Endothelial cell of umbilical vein (primary cell): ENCODE measurements at regions of chrX and their contacts with region 1.

Region 1: GRCh38 chrX:43557792-43558191 is 98.3 kb upstream of the MAOA start:
- DNase-seq: peak; percentile 59
- H3K4me3 ChIP-seq: no peak overlapping the region
- H3K27ac ChIP-seq: no peak overlapping the region
- H3K4me1 ChIP-seq: no peaks in the 10 kb centered on the region
- H3K27me3 ChIP-seq: no peaks in the 10 kb centered on the region
- CTCF ChIP-seq: peak; percentile 29 to 55
- POLR2A ChIP-seq: no peak

Region 2: DNA sequence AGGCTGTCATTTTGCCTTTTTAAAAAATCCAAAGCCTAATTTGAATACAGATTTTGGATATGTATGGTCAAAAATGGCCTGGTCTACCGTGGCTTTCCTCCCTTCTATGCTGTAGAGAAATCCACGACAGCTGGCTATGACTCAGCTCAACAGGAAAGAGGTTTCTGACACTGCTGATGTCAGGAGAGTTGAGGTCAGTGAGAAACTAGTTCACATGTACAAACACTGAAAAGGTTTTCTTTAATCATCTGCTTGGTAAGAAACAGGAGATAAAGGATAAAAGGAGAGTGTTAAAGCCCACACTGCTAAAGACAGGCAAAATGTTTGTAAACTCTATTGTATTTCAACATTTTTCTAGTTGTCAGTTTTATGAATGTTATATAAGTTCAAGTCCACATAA is 1996.7 kb before region 1 on chrX:
- CTCF ChIA-PET with region 1: no interaction called
- POLR2A ChIA-PET with region 1: no interaction called
- dilution Hi-C with region 1: no loop called
- intact Hi-C with region 1: loop called (anchors 2 kb)
- DNase-seq: peak; percentile 79
- H3K4me3 ChIP-seq: no peak overlapping the region
- H3K27ac ChIP-seq: peak overlapping the region; percentile 62
- H3K4me1 ChIP-seq: peaks cover 15% of the 10 kb centered on the region
- H3K27me3 ChIP-seq: no peaks in the 10 kb centered on the region
- CTCF ChIP-seq: no peak
- POLR2A ChIP-seq: no peak

Region 3: GRCh38 chrX:41796577-41796976 is 1761.2 kb before region 1 on chrX:
- CTCF ChIA-PET with region 1: interaction called, 9 read pairs
- POLR2A ChIA-PET with region 1: no interaction called
- dilution Hi-C with region 1: no loop called
- intact Hi-C with region 1: loop called (anchors 5 kb)
- DNase-seq: no peak
- H3K4me3 ChIP-seq: no peak overlapping the region
- H3K27ac ChIP-seq: no peak overlapping the region
- H3K4me1 ChIP-seq: no peaks in the 10 kb centered on the region
- H3K27me3 ChIP-seq: no peaks in the 10 kb centered on the region
- CTCF ChIP-seq: no peak
- POLR2A ChIP-seq: no peak

Region 4: GRCh38 chrX:43349363-43349762 is 208.4 kb before region 1 on chrX:
- CTCF ChIA-PET with region 1: interaction called, 15 read pairs
- POLR2A ChIA-PET with region 1: no interaction called
- dilution Hi-C with region 1: no loop called
- intact Hi-C with region 1: loop called (anchors 2 kb)
- DNase-seq: peak; percentile 30
- H3K4me3 ChIP-seq: no peak overlapping the region
- H3K27ac ChIP-seq: no peak overlapping the region
- H3K4me1 ChIP-seq: no peaks in the 10 kb centered on the region
- H3K27me3 ChIP-seq: no peaks in the 10 kb centered on the region
- CTCF ChIP-seq: peak; percentile 40 to 61
- POLR2A ChIP-seq: no peak

Region 5: DNA sequence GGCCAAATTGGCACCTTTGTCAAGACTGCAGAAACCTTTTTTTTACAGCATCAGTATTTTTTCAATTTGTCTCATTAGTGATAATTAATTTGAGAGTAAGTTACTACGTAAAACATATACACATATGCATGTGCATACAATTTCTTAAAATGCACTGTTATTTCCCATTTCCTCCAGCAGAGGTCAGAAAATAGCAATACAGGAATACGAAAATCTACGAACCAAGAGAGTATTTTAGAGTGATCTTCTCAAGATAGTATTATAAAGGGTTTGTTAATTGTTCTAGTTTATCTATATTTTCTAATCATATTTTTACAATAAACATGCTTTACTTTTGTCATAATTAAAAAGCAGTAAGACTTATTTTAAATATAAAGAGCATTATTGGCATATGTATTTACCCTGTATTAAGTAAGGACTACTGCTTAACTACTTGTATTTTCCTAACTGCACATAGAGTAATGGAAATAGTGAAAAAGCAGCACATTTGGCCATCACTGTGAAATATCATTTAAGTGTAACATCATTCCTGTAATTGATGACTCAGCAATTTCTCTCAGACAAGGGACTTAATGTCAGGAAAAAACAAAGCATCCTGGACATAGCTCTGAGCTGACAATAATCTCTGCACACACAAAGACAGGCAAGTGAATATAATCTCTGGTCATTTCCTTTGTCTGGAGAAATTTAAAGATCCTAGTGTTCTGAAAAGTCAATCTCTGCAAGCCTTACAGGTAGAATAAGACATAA is 278.8 kb after region 1 on chrX:
- CTCF ChIA-PET with region 1: no interaction called
- POLR2A ChIA-PET with region 1: no interaction called
- dilution Hi-C with region 1: no loop called
- intact Hi-C with region 1: loop called (anchors 2 kb)
- DNase-seq: peak; percentile 35
- H3K4me3 ChIP-seq: no peak overlapping the region
- H3K27ac ChIP-seq: no peak overlapping the region
- H3K4me1 ChIP-seq: no peaks in the 10 kb centered on the region
- H3K27me3 ChIP-seq: peaks cover 0 to 1% of the 10 kb centered on the region in 2 experiments
- CTCF ChIP-seq: peak; percentile 4 to 10
- POLR2A ChIP-seq: no peak

Region 6: GRCh38 chrX:43899878-43900815 is 342.4 kb after region 1 on chrX:
- CTCF ChIA-PET with region 1: no interaction called
- POLR2A ChIA-PET with region 1: no interaction called
- dilution Hi-C with region 1: no loop called
- intact Hi-C with region 1: no loop called
- DNase-seq: no peak
- H3K4me3 ChIP-seq: no peak overlapping the region
- H3K27ac ChIP-seq: no peak overlapping the region
- H3K4me1 ChIP-seq: no peaks in the 10 kb centered on the region
- H3K27me3 ChIP-seq: no peaks in the 10 kb centered on the region
- CTCF ChIP-seq: no peak
- POLR2A ChIP-seq: no peak